Heart right ventricle (tissue), 16 donors: ENCODE measurements at regions of chr4 and their contacts with region 1.

Region 1: GRCh38 chr4:102500696-102501446 is at the start of gene NFKB1:
- DNase-seq: peak; percentile 66 to 77
- ATAC-seq: peak; percentile 53 to 74 (median 61)
- H3K4me3 ChIP-seq: peak within 1 kb of the TSS; percentile 65 to 98 (median 89)
- H3K27ac ChIP-seq: peak within 1 kb of the TSS; percentile 93 to 100 (median 98)
- H3K4me1 ChIP-seq: peaks cover 5 to 46% (median 42%) of the 10 kb centered on the region in 9 donors
- H3K27me3 ChIP-seq: no peaks in the 10 kb centered on the region
- CTCF ChIP-seq: peak in 2 of 9 donors; percentile 0 to 5
- total RNA-seq, gene NFKB1: 17.0 to 30.3 (median 20.6) TPM

Region 2: DNA sequence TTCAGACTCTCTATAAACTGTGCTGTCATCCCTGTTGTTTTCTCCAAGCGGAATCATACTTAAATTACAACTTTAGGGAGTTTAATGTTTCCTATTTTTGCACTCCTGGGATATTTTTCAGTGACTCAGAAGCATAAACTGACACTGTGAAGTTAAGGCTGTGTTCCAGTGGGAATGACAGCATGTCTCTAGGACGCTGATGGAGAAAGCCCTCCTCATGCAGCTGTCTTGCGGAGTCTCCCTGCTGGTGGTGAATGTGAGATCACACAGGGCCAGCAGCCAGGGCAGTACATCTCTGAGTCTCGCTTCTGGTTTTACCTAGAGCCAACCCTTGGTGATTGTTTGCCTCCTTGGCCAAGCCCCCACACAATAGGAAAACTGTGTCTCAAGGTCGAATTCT is 53.6 kb after region 1 on chr4:
- intact Hi-C with region 1: loop called in 3 of 10 experiments (anchors 5 to 10 kb)
- DNase-seq: peak; percentile 33 to 57
- ATAC-seq: peak; percentile 64 to 96 (median 86)
- H3K4me3 ChIP-seq: no peak overlapping the region
- H3K27ac ChIP-seq: peak overlapping the region in 4 of 10 donors; percentile 10 to 45 (median 18)
- H3K4me1 ChIP-seq: peaks cover 0 to 55% (median 37%) of the 10 kb centered on the region in 9 donors
- H3K27me3 ChIP-seq: no peaks in the 10 kb centered on the region
- CTCF ChIP-seq: no peak

Region 3: GRCh38 chr4:102578819-102579218 is 77.9 kb after region 1 on chr4:
- intact Hi-C with region 1: loop called in 2 of 10 experiments (anchors 10 kb)
- DNase-seq: no peak
- ATAC-seq: no peak
- H3K4me3 ChIP-seq: no peak overlapping the region
- H3K27ac ChIP-seq: no peak overlapping the region
- H3K4me1 ChIP-seq: peaks cover 0 to 22% (median 7%) of the 10 kb centered on the region in 9 donors
- H3K27me3 ChIP-seq: no peaks in the 10 kb centered on the region
- CTCF ChIP-seq: no peak

Region 4: DNA sequence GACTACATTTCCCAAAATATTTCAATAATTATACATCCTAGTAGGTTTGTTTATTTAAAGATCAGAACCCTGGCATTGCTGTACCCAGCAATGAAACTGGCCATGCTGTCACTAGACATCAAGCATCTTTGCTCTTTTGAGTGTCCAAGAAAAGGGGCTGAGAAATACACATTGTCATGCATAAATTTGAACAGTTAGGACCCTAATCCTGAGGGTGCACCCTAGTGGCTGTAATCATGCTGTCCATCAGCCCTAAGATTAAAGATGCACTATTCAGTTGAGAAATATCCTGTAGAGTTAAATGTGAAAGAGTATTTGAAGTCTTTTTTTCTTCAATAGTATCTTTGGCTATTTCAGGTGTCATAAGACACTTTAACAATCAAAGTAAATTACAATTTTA is 109.1 kb after region 1 on chr4:
- intact Hi-C with region 1: loop called in 2 of 10 experiments (anchors 5 to 10 kb)
- DNase-seq: no peak
- ATAC-seq: no peak
- H3K4me3 ChIP-seq: no peak overlapping the region
- H3K27ac ChIP-seq: no peak overlapping the region
- H3K4me1 ChIP-seq: peaks cover 0 to 19% (median 1%) of the 10 kb centered on the region in 9 donors
- H3K27me3 ChIP-seq: no peaks in the 10 kb centered on the region
- CTCF ChIP-seq: peak in 4 of 9 donors; percentile 11 to 28 (median 21)

Region 5: DNA sequence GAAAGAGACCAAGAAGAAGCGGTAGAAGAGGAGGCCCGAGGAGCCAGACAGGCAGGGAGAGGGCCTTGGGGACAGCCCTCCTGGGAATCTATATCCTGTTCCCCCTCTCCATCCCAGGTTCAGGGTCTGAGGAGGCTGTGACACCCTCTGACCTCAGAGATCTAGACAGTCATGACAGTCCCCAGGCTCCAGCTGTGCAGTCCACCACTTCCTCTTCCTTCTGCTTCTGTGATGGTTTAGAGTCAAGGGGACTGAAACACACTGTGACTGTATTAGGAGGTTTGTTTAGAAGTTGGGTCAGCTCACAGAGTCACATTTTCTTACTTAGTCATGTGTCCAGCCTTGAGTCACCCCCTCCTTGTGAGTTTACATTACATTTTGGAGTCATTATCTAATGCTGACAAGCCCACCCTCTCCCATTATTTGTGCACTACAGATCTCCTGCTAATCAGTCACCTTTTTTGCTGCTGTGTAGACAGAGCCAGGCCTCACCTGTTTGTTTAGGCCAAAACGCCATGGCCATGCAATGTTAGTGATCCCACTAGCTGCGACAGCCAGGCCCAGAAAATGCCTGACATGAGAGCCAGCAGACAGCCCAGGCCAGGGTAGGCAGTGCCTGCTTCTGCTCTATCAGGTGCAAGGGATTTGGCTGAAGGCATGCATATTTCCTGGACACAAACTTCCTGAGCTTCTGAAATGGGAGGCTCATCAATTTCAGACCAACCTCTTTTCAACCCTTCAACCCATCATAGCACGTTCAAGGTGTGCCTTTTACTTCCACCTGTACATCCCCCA is 233.9 kb after region 1 on chr4:
- intact Hi-C with region 1: no loop called
- DNase-seq: no peak
- ATAC-seq: peak in 7 of 8 donors; percentile 17 to 53 (median 45)
- H3K4me3 ChIP-seq: no peak overlapping the region
- H3K27ac ChIP-seq: peak overlapping the region in 8 of 10 donors; percentile 1 to 70 (median 32)
- H3K4me1 ChIP-seq: peaks cover 0 to 31% (median 13%) of the 10 kb centered on the region in 9 donors
- H3K27me3 ChIP-seq: no peaks in the 10 kb centered on the region
- CTCF ChIP-seq: no peak

Region 6: GRCh38 chr4:102868781-102869568 is 368.1 kb after region 1 on chr4 and contains the start of gene CISD2:
- intact Hi-C with region 1: loop called in 1 of 10 experiments (anchors 10 kb)
- DNase-seq: peak; percentile 91 to 93
- ATAC-seq: peak; percentile 97 to 100 (median 97)
- H3K4me3 ChIP-seq: peak within 1 kb of the TSS; percentile 49 to 82 (median 71)
- H3K27ac ChIP-seq: peak within 1 kb of the TSS; percentile 82 to 97 (median 92)
- H3K4me1 ChIP-seq: peaks cover 0 to 49% (median 19%) of the 10 kb centered on the region in 9 donors
- H3K27me3 ChIP-seq: no peaks in the 10 kb centered on the region
- CTCF ChIP-seq: peak in 1 of 9 donors; percentile 8
- total RNA-seq, gene CISD2: 12.1 to 22.1 (median 16.9) TPM